CD8-positive, alpha-beta T cell (primary cell): ENCODE measurements at regions of chr14 and their contacts with region 1.

Region 1: GRCh38 chr14:39232554-39233415 is 930 bp upstream of the MIA2 start:
- DNase-seq: peak in 2 of 9 experiments; percentile 34 to 61
- ATAC-seq: no peak
- H3K4me3 ChIP-seq: no peak overlapping the region
- H3K4me3 Mint-ChIP-seq: no peak overlapping the region
- H3K27ac ChIP-seq: peak overlapping the region in 1 of 2 experiments; percentile 60
- H3K27ac Mint-ChIP-seq: peak overlapping the region; percentile 35
- H3K4me1 ChIP-seq: peaks cover 21% of the 10 kb centered on the region
- H3K4me1 Mint-ChIP-seq: peaks cover 39% of the 10 kb centered on the region
- H3K27me3 ChIP-seq: no peaks in the 10 kb centered on the region
- H3K27me3 Mint-ChIP-seq: no peaks in the 10 kb centered on the region
- CTCF ChIP-seq: no peak

Region 2: GRCh38 chr14:38238332-38238731 is 994.5 kb before region 1 on chr14:
- CTCF ChIA-PET with region 1: no interaction called
- POLR2A ChIA-PET with region 1: no interaction called
- intact Hi-C with region 1: no loop called
- DNase-seq: no peak
- ATAC-seq: no peak
- H3K4me3 ChIP-seq: no peak overlapping the region
- H3K4me3 Mint-ChIP-seq: no peak overlapping the region
- H3K27ac ChIP-seq: no peak overlapping the region
- H3K27ac Mint-ChIP-seq: no peak overlapping the region
- H3K4me1 ChIP-seq: no peaks in the 10 kb centered on the region
- H3K4me1 Mint-ChIP-seq: no peaks in the 10 kb centered on the region
- H3K27me3 ChIP-seq: no peaks in the 10 kb centered on the region
- H3K27me3 Mint-ChIP-seq: peaks cover 14% of the 10 kb centered on the region
- CTCF ChIP-seq: no peak

Region 3: GRCh38 chr14:39368261-39368959 is 135.6 kb after region 1 on chr14:
- CTCF ChIA-PET with region 1: no interaction called
- POLR2A ChIA-PET with region 1: no interaction called
- intact Hi-C with region 1: loop called in 1 of 2 experiments (anchors 1 kb)
- DNase-seq: peak in 3 of 9 experiments; percentile 17 to 50 (median 39)
- ATAC-seq: no peak
- H3K4me3 ChIP-seq: no peak overlapping the region
- H3K4me3 Mint-ChIP-seq: no peak overlapping the region
- H3K27ac ChIP-seq: no peak overlapping the region
- H3K27ac Mint-ChIP-seq: no peak overlapping the region
- H3K4me1 ChIP-seq: no peaks in the 10 kb centered on the region
- H3K4me1 Mint-ChIP-seq: peaks cover 2% of the 10 kb centered on the region
- H3K27me3 ChIP-seq: no peaks in the 10 kb centered on the region
- H3K27me3 Mint-ChIP-seq: no peaks in the 10 kb centered on the region
- CTCF ChIP-seq: peak; percentile 19

Region 4: GRCh38 chr14:39426605-39427004 is 193.8 kb after region 1 on chr14:
- CTCF ChIA-PET with region 1: interaction called, 5 read pairs
- POLR2A ChIA-PET with region 1: interaction called, 16 read pairs
- intact Hi-C with region 1: loop called (anchors 1 to 5 kb)
- DNase-seq: peak in 2 of 9 experiments; percentile 22 to 46
- ATAC-seq: no peak
- H3K4me3 ChIP-seq: no peak overlapping the region
- H3K4me3 Mint-ChIP-seq: peak overlapping the region; percentile 33
- H3K27ac ChIP-seq: no peak overlapping the region
- H3K27ac Mint-ChIP-seq: peak overlapping the region; percentile 3
- H3K4me1 ChIP-seq: peaks cover 64% of the 10 kb centered on the region
- H3K4me1 Mint-ChIP-seq: peaks cover 82% of the 10 kb centered on the region
- H3K27me3 ChIP-seq: no peaks in the 10 kb centered on the region
- H3K27me3 Mint-ChIP-seq: no peaks in the 10 kb centered on the region
- CTCF ChIP-seq: peak; percentile 19

Region 5: DNA sequence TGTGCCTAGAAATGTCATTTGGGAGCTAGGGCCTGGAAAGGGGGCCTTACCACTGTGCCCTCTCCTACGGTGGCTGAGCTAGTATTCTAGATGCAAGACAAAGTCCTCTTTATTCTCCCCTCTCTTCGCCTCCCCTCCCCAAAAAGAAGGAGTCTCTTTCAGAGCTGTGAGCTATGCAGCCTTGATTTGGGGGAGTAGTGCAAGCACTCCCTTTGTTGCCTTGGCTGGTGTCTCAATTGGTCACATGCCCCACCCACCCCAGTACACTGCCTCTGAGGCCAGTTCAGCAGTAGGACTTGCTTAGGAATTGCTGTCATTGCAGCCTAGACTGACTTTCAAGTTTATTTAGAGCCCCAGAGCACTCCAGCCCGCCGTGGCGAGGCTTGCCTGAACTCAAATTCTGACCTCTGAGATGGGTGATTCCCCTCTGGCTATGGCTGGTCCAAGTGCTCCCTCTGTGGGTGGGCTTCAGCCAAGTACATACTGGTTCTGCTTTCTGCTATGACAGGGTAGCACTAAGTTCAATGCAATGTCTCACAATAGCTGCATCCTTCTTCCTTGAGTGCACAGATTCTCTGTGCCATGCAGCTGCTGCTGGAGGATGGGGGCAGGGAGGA is 236.4 kb after region 1 on chr14:
- CTCF ChIA-PET with region 1: interaction called, 6 read pairs
- POLR2A ChIA-PET with region 1: no interaction called
- intact Hi-C with region 1: loop called in 1 of 2 experiments (anchors 5 kb)
- DNase-seq: peak in 7 of 9 experiments; percentile 14 to 52 (median 38)
- ATAC-seq: peak; percentile 36
- H3K4me3 ChIP-seq: no peak overlapping the region
- H3K4me3 Mint-ChIP-seq: no peak overlapping the region
- H3K27ac ChIP-seq: no peak overlapping the region
- H3K27ac Mint-ChIP-seq: no peak overlapping the region
- H3K4me1 ChIP-seq: no peaks in the 10 kb centered on the region
- H3K4me1 Mint-ChIP-seq: no peaks in the 10 kb centered on the region
- H3K27me3 ChIP-seq: no peaks in the 10 kb centered on the region
- H3K27me3 Mint-ChIP-seq: peaks cover 13% of the 10 kb centered on the region
- CTCF ChIP-seq: no peak